ENCODE measurements at regions of chr16 and their contacts with region 1.

Region 1: GRCh38 chr16:4616047-4616811 is 1.5 kb upstream of the UBALD1 start:
- DNase-seq: peak; percentile 93 to 100 (median 98)
- ATAC-seq: peak; percentile 94
- H3K4me3 ChIP-seq: peak overlapping the region; percentile 95
- H3K4me3 Mint-ChIP-seq: peak overlapping the region; percentile 94 to 99 (median 98)
- H3K27ac ChIP-seq: peak overlapping the region; percentile 98
- H3K27ac Mint-ChIP-seq: peak overlapping the region; percentile 96 to 100 (median 99)
- H3K4me1 ChIP-seq: peaks cover 28 to 37% of the 10 kb centered on the region in 2 donors
- H3K4me1 Mint-ChIP-seq: peaks cover 8 to 43% (median 24%) of the 10 kb centered on the region in 7 donors
- H3K27me3 ChIP-seq: no peaks in the 10 kb centered on the region
- H3K27me3 Mint-ChIP-seq: no peaks in the 10 kb centered on the region

Region 2: GRCh38 chr16:2883027-2883851 is 1733.0 kb before region 1 on chr16 and contains the start of gene FLYWCH2:
- CTCF ChIA-PET with region 1: no interaction called
- POLR2A ChIA-PET with region 1: no interaction called
- intact Hi-C with region 1: loop called in 1 of 2 experiments (anchors 5 kb)
- DNase-seq: peak; percentile 98 to 100 (median 100)
- ATAC-seq: peak; percentile 89
- H3K4me3 ChIP-seq: peak within 1 kb of the TSS; percentile 69
- H3K4me3 Mint-ChIP-seq: peak within 1 kb of the TSS; percentile 90 to 97 (median 94)
- H3K27ac ChIP-seq: peak within 1 kb of the TSS; percentile 84
- H3K27ac Mint-ChIP-seq: peak within 1 kb of the TSS; percentile 93 to 99 (median 97)
- H3K4me1 ChIP-seq: peaks cover 6% of the 10 kb centered on the region in 2 donors
- H3K4me1 Mint-ChIP-seq: peaks cover 0 to 18% (median 13%) of the 10 kb centered on the region in 7 donors
- H3K27me3 ChIP-seq: no peaks in the 10 kb centered on the region
- H3K27me3 Mint-ChIP-seq: no peaks in the 10 kb centered on the region
- total RNA-seq, gene FLYWCH2: 13.6 to 30.4 (median 24.0) TPM

Region 3: GRCh38 chr16:4350787-4351659 is 265.2 kb before region 1 on chr16 and contains the start of gene PAM16:
- CTCF ChIA-PET with region 1: no interaction called
- POLR2A ChIA-PET with region 1: no interaction called
- intact Hi-C with region 1: loop called in 1 of 2 experiments (anchors 2 kb)
- DNase-seq: peak; percentile 95 to 99 (median 98)
- ATAC-seq: peak; percentile 93
- H3K4me3 ChIP-seq: peak within 1 kb of the TSS; percentile 91
- H3K4me3 Mint-ChIP-seq: peak within 1 kb of the TSS; percentile 90 to 98 (median 94)
- H3K27ac ChIP-seq: peak within 1 kb of the TSS; percentile 87
- H3K27ac Mint-ChIP-seq: peak within 1 kb of the TSS; percentile 76 to 95 (median 92)
- H3K4me1 ChIP-seq: peaks cover 5 to 7% of the 10 kb centered on the region in 2 donors
- H3K4me1 Mint-ChIP-seq: peaks cover 11 to 38% (median 32%) of the 10 kb centered on the region in 7 donors
- H3K27me3 ChIP-seq: no peaks in the 10 kb centered on the region
- H3K27me3 Mint-ChIP-seq: no peaks in the 10 kb centered on the region
- total RNA-seq, gene PAM16: 34.1 to 46.2 (median 45.0) TPM

Region 4: DNA sequence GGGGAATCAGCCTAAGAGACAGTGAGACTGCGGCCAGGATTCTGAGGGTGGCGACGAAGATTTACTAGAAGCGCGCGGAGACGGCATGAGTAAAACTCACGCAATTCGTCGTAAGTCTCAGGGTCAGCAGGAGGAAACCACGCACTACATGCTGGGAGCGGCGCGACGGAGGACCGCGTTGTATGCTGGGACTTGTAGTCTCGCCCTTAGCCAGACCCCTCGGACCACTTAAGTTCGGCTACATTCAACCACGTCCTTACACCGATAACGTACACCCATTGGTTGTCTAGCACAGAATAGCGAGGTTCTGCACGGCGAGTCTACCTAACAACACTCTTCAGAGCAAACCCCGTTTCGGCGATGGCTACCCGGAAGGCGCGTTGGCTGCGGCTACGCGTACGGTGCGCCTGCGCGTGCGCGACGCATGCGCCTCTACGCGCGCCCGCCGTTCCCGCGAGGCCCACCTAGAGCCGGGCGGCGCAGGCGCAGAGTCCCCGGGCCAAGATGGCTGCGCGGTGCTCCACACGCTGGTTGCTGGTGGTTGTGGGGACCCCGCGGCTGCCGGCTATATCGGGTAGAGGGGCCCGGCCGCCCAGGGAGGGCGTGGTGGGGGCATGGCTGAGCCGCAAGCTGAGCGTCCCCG is 190.7 kb before region 1 on chr16 and contains the start of gene DNAJA3:
- CTCF ChIA-PET with region 1: no interaction called
- POLR2A ChIA-PET with region 1: no interaction called
- intact Hi-C with region 1: loop called (anchors 1 to 2 kb)
- DNase-seq: peak; percentile 91 to 97 (median 95)
- ATAC-seq: peak; percentile 93
- H3K4me3 ChIP-seq: peak within 1 kb of the TSS; percentile 97
- H3K4me3 Mint-ChIP-seq: peak within 1 kb of the TSS; percentile 92 to 99 (median 98)
- H3K27ac ChIP-seq: peak within 1 kb of the TSS; percentile 95
- H3K27ac Mint-ChIP-seq: peak within 1 kb of the TSS; percentile 99 to 100 (median 100)
- H3K4me1 ChIP-seq: peaks cover 18% of the 10 kb centered on the region in 2 donors
- H3K4me1 Mint-ChIP-seq: peaks cover 26 to 37% (median 31%) of the 10 kb centered on the region in 7 donors
- H3K27me3 ChIP-seq: no peaks in the 10 kb centered on the region
- H3K27me3 Mint-ChIP-seq: peaks cover 0 to 4% (median 0%) of the 10 kb centered on the region in 5 donors
- total RNA-seq, gene DNAJA3: 33.6 to 79.8 (median 70.5) TPM

Region 5: DNA sequence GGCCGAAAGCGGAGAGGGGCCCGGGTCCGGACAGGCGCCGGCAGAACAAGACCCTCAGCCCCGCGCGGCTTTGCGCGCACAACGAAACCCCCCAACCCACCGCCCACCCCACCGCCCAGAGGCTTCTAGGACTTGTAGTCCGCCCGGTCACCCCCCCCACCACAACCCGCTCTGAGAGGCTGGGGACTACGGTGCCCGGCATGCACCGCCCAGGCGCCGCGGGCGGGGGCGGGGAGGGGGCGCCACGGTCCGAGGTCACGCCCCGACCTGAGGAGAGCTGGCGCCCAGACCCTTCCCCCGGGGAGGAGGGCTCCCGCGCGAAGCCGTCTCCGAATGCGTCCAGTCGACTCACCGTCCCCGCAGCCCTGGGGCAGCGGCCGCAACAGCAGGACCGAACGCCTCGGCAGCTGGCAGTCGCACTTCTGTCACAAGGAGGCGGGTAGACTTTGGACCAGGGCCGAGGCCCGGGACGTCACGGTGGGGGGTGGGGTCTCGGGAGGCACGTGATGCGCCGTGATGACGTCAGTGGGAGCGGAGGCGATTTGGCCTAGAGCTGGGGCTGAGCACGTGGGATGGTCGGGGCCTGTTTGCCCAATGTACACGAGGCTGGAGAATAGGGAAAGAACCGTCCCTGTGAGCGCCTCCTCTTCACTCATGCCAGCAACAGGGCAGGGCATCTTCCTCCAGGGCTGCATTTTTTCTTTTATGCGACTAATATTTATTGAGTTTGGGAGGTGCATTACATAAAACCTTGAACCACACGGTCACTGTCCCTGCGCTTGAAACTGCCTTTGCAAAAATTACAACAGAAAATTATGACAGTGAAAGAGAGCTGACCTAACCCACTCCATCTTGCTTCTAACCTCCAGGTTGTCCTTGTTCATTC is 77.6 kb before region 1 on chr16 and contains the start of gene CDIP1:
- CTCF ChIA-PET with region 1: no interaction called
- POLR2A ChIA-PET with region 1: interaction called, 5 read pairs
- intact Hi-C with region 1: loop called (anchors 1 kb)
- DNase-seq: peak; percentile 85 to 93 (median 90)
- ATAC-seq: peak; percentile 92
- H3K4me3 ChIP-seq: peak within 1 kb of the TSS; percentile 81
- H3K4me3 Mint-ChIP-seq: peak within 1 kb of the TSS; percentile 66 to 91 (median 82)
- H3K27ac ChIP-seq: peak within 1 kb of the TSS; percentile 96
- H3K27ac Mint-ChIP-seq: peak within 1 kb of the TSS; percentile 78 to 97 (median 92)
- H3K4me1 ChIP-seq: peaks cover 10 to 33% of the 10 kb centered on the region in 2 donors
- H3K4me1 Mint-ChIP-seq: peaks cover 24 to 44% (median 40%) of the 10 kb centered on the region in 7 donors
- H3K27me3 ChIP-seq: no peaks in the 10 kb centered on the region
- H3K27me3 Mint-ChIP-seq: peaks cover 0 to 9% (median 0%) of the 10 kb centered on the region in 5 donors
- total RNA-seq, gene CDIP1: 28.1 to 41.1 (median 31.0) TPM

Region 6: GRCh38 chr16:4693296-4693955 is 77.2 kb after region 1 on chr16 and contains the start of gene NUDT16L1:
- CTCF ChIA-PET with region 1: interaction called, 3 read pairs
- POLR2A ChIA-PET with region 1: interaction called, 28 read pairs
- intact Hi-C with region 1: loop called (anchors 1 kb)
- DNase-seq: peak; percentile 95 to 99 (median 98)
- ATAC-seq: peak; percentile 97
- H3K4me3 ChIP-seq: peak within 1 kb of the TSS; percentile 93
- H3K4me3 Mint-ChIP-seq: peak within 1 kb of the TSS; percentile 78 to 91 (median 86)
- H3K27ac ChIP-seq: peak within 1 kb of the TSS; percentile 93
- H3K27ac Mint-ChIP-seq: peak within 1 kb of the TSS; percentile 73 to 93 (median 88)
- H3K4me1 ChIP-seq: peaks cover 14% of the 10 kb centered on the region in 2 donors
- H3K4me1 Mint-ChIP-seq: peaks cover 8 to 23% (median 14%) of the 10 kb centered on the region in 7 donors
- H3K27me3 ChIP-seq: no peaks in the 10 kb centered on the region
- H3K27me3 Mint-ChIP-seq: no peaks in the 10 kb centered on the region
- total RNA-seq, gene NUDT16L1: 42.8 to 65.4 (median 53.3) TPM

Region 7: GRCh38 chr16:4802659-4803287 is 186.5 kb after region 1 on chr16:
- CTCF ChIA-PET with region 1: interaction called, 4 read pairs
- POLR2A ChIA-PET with region 1: interaction called, 4 read pairs
- intact Hi-C with region 1: loop called (anchors 1 to 2 kb)
- DNase-seq: peak; percentile 82 to 97 (median 93)
- ATAC-seq: peak; percentile 93
- H3K4me3 ChIP-seq: peak overlapping the region; percentile 79
- H3K4me3 Mint-ChIP-seq: peak overlapping the region; percentile 81 to 86 (median 86)
- H3K27ac ChIP-seq: peak overlapping the region; percentile 60
- H3K27ac Mint-ChIP-seq: peak overlapping the region in 8 of 9 donors; percentile 36 to 84 (median 74)
- H3K4me1 ChIP-seq: peaks cover 10 to 18% of the 10 kb centered on the region in 2 donors
- H3K4me1 Mint-ChIP-seq: peaks cover 7 to 19% (median 12%) of the 10 kb centered on the region in 7 donors
- H3K27me3 ChIP-seq: no peaks in the 10 kb centered on the region
- H3K27me3 Mint-ChIP-seq: no peaks in the 10 kb centered on the region